ENCODE measurements at regions of chr4 and their contacts with region 1.

Region 1: DNA sequence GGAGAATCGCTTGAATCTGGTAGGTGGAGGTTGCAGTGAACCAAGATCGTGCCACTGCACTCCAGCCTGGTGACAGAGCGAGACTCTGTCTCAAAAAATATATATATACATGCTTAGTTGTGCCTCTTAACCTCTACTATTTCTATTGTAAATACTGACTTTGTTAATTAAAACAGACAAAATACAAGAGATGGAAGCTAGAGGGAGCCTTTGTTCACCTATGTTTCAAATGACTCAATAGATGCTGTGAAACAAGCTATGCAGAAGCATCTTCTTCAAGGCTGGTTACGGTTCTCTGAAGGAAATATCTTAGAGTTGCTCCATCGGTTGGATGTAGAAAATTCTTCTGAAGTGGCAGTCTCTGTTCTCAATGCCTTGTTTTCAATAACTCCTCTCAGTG is 6.2 kb downstream of the NCAPG start:
- DNase-seq: peak in 4 of 5 donors; percentile 45 to 58 (median 50)
- H3K4me3 ChIP-seq: no peak overlapping the region
- H3K4me3 Mint-ChIP-seq: peak overlapping the region in 7 of 8 donors; percentile 8 to 84 (median 58)
- H3K27ac ChIP-seq: no peak overlapping the region
- H3K27ac Mint-ChIP-seq: peak overlapping the region; percentile 31 to 74 (median 57)
- H3K4me1 ChIP-seq: peaks cover 12% of the 10 kb centered on the region
- H3K4me1 Mint-ChIP-seq: peaks cover 13 to 17% (median 15%) of the 10 kb centered on the region in 4 donors
- H3K27me3 ChIP-seq: no peaks in the 10 kb centered on the region
- H3K27me3 Mint-ChIP-seq: no peaks in the 10 kb centered on the region

Region 2: DNA sequence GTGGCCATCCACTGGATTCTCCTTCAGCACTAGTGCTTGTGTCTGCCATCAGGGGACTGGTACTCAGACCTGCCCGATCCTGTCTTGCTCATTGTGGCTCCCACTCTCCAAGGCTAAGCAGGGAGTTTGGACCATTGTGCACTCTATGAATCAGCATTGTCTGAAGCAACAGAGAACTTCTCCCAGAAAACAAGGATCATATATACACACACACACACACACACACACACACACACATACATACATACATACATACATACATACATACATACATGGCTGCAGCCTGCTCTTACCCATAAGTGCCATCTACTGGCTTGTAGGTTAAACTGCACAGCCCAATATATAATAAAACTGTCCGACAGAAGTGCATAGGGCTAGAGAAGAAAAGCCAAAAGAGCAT is 549.9 kb after region 1 on chr4:
- CTCF ChIA-PET with region 1: interaction called, 23 read pairs
- POLR2A ChIA-PET with region 1: no interaction called
- intact Hi-C with region 1: loop called (anchors 1 kb)
- DNase-seq: peak in 4 of 5 donors; percentile 6 to 15 (median 12)
- H3K4me3 ChIP-seq: no peak overlapping the region
- H3K4me3 Mint-ChIP-seq: no peak overlapping the region
- H3K27ac ChIP-seq: no peak overlapping the region
- H3K27ac Mint-ChIP-seq: no peak overlapping the region
- H3K4me1 ChIP-seq: no peaks in the 10 kb centered on the region
- H3K4me1 Mint-ChIP-seq: no peaks in the 10 kb centered on the region
- H3K27me3 ChIP-seq: no peaks in the 10 kb centered on the region
- H3K27me3 Mint-ChIP-seq: peaks cover 0 to 2% of the 10 kb centered on the region in 2 donors